ENCODE measurements at regions of chr14 and their contacts with region 1.

Region 1: DNA sequence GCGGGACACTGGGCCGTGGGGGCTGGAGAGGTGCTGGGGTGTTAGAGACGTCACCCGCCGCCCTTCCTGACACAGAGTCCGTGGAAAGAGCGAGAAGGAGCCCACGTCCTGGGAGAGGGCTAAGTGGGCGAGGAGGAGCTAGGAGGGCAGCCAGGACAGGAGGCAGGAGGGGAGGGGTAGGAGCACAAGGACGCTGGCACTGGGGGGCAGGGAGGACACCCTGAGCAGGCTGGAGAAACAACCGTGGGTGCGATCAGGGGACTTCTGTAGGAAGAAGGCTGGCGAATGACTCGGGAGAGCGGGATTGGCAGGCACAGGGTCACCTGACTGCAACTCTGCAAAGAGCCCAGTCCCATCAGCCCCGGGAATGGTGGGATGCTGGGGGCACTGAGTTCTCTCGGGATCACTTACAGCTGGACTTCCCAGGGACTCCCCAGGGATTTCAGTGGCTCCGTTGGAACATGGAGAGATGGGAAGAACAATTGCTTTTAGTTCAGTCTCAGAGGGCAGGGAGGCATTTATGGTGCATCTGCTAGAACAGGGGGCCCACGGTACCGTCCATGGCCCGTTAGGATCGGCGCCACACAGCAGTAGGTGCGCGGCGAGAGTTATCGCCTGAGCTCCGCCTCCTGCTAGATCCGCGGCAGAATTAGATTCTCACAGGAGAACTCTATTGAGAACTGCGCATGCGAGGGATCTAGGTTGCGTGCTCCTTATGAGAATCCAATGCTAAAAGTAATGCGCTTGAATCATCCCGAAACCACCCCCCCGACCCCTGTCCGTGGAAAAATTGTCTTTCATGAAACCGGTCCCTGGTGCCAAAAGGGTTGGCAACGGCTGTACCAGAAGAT is 24.3 kb downstream of the UBR7 start:
- DNase-seq: peak; percentile 68
- H3K4me3 ChIP-seq: peak overlapping the region; percentile 43
- H3K27ac ChIP-seq: peak overlapping the region; percentile 57
- H3K4me1 ChIP-seq: no peaks in the 10 kb centered on the region
- H3K27me3 ChIP-seq: no peaks in the 10 kb centered on the region
- CTCF ChIP-seq: no peak

Region 2: GRCh38 chr14:93086441-93087055 is 144.8 kb before region 1 on chr14:
- CTCF ChIA-PET with region 1: no interaction called
- POLR2A ChIA-PET with region 1: no interaction called
- intact Hi-C with region 1: no loop called
- DNase-seq: no peak
- H3K4me3 ChIP-seq: no peak overlapping the region
- H3K27ac ChIP-seq: peak overlapping the region; percentile 42
- H3K4me1 ChIP-seq: peaks cover 12% of the 10 kb centered on the region
- H3K27me3 ChIP-seq: no peaks in the 10 kb centered on the region
- CTCF ChIP-seq: no peak

Region 3: DNA sequence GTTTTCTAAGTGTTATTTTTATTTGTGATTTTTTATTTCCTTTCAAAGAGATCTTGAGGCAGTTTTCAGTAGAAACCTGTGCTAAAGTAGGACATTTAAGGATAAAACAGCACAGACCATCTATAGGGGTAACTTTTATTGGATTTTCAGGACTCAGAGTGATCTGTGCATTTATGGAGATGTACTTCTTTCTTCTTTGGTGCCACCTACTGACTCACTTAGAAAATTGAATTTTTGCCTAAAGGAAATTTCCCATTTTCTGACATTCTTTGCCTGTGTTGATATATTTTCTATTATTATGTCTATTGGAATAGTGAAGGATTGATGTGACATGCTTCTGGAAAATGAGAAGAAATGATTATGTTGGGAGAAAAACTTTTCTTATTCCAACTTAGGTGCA is 312.4 kb after region 1 on chr14:
- CTCF ChIA-PET with region 1: interaction called, 7 read pairs
- POLR2A ChIA-PET with region 1: no interaction called
- intact Hi-C with region 1: loop called (anchors 5 kb)
- DNase-seq: peak; percentile 65
- H3K4me3 ChIP-seq: no peak overlapping the region
- H3K27ac ChIP-seq: no peak overlapping the region
- H3K4me1 ChIP-seq: peaks cover 10% of the 10 kb centered on the region
- H3K27me3 ChIP-seq: no peaks in the 10 kb centered on the region
- CTCF ChIP-seq: peak; percentile 67

Region 4: GRCh38 chr14:93619176-93619793 is 387.9 kb after region 1 on chr14:
- CTCF ChIA-PET with region 1: no interaction called
- POLR2A ChIA-PET with region 1: no interaction called
- intact Hi-C with region 1: loop called (anchors 10 kb)
- DNase-seq: peak; percentile 71
- H3K4me3 ChIP-seq: no peak overlapping the region
- H3K27ac ChIP-seq: no peak overlapping the region
- H3K4me1 ChIP-seq: no peaks in the 10 kb centered on the region
- H3K27me3 ChIP-seq: peaks cover 16% of the 10 kb centered on the region
- CTCF ChIP-seq: peak; percentile 80

Measured in A673 (cell line).